ENCODE measurements at regions of chr3 and their contacts with region 1.

Region 1: DNA sequence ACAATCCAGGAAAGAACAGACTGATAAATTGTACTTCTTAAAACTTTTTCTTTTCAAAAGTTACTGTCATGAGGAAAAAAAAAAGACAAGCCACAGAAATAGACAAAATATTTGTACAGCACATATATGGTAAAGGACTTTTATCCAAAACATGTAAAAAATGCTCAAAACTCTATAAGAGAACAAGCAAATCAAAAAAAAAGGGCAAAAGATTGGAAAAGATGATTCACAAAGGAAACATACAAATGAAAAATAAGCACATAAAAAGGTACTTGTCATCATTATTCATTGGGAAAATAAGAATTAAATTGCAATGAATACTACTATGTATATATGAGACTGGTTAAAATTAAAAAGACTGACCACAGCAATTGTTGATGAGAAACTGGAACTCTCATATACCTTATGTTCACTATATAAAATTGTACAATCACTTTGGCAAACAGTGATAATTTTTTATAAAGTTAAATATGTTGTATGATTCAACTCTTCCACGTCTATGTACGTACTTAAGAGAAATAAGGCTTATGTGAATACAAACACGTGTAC is 39.7 kb downstream of the DIPK2A start:
- DNase-seq: no peak
- H3K4me3 ChIP-seq: no peak overlapping the region
- H3K4me3 Mint-ChIP-seq: no peak overlapping the region
- H3K27ac Mint-ChIP-seq: no peak overlapping the region
- H3K4me1 ChIP-seq: no peaks in the 10 kb centered on the region
- H3K4me1 Mint-ChIP-seq: no peaks in the 10 kb centered on the region
- H3K27me3 ChIP-seq: no peaks in the 10 kb centered on the region
- H3K27me3 Mint-ChIP-seq: no peaks in the 10 kb centered on the region
- CTCF ChIP-seq: no peak

Region 2: DNA sequence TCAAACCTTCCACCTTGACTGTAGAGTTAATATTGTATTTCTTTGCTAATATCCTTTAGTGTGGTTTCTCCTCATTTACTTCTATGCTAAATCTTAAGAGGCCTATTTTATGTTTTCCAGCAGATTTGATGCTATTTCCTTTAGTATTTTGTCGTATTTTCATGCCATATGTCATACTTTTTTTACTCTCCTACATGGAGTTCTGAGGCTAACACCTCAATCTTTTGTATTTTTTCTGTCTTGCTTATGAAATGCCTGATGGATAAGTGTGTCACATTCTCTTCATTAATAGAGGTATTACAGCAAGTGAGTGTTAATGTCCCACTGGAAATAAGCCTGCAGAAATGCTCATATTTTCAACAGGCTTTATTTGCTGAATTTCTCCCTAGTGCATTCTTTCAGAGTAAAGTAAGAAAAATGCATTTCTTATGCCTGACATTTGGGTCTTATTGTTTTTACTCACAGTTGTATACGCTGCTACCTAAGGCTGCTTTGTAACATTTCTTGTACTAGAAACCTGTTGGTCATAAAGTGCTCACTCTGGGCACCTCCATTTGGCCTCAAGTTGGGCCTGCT is 23.5 kb after region 1 on chr3:
- CTCF ChIA-PET with region 1: no interaction called
- POLR2A ChIA-PET with region 1: no interaction called
- intact Hi-C with region 1: loop called (anchors 1 kb)
- DNase-seq: no peak
- H3K4me3 ChIP-seq: no peak overlapping the region
- H3K4me3 Mint-ChIP-seq: no peak overlapping the region
- H3K27ac Mint-ChIP-seq: no peak overlapping the region
- H3K4me1 ChIP-seq: no peaks in the 10 kb centered on the region
- H3K4me1 Mint-ChIP-seq: peaks cover 6% of the 10 kb centered on the region
- H3K27me3 ChIP-seq: no peaks in the 10 kb centered on the region
- H3K27me3 Mint-ChIP-seq: no peaks in the 10 kb centered on the region
- CTCF ChIP-seq: no peak